Endothelial cell of umbilical vein (primary cell): ENCODE measurements at regions of chr12 and their contacts with region 1.

Region 1: GRCh38 chr12:1117970-1118563 is 127.0 kb downstream of the ERC1 start:
- DNase-seq: peak; percentile 81
- H3K4me3 ChIP-seq: no peak overlapping the region
- H3K27ac ChIP-seq: no peak overlapping the region
- H3K4me1 ChIP-seq: peaks cover 13% of the 10 kb centered on the region
- H3K27me3 ChIP-seq: no peaks in the 10 kb centered on the region
- CTCF ChIP-seq: peak; percentile 66 to 79
- POLR2A ChIP-seq: no peak

Region 2: DNA sequence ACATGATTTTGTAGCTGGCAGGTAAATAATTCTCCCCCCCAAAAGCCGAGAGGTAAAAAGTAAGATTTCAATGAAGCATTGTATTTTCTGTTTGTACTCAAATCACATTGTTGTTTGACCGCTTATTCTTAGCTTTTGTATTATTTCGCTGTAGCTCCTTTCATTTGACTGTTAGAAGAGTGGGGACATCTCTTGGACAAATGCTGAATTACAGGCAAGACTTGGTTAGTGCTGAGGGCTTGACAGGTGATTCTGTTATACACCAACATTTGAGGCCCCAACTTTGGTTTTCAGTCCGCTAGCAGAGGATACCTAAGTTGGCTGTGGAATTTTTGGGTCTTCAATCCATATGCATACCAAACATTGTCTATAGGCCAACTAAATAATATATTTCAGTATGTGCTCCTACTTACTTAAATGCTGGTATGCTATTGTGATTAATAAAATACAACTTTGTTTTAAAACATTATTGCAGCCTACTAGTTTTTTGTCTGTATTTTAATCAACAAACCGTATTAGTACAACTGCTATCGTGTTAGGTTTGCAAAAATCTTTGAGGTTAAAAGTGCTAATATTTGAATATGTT is 24.8 kb before region 1 on chr12:
- CTCF ChIA-PET with region 1: interaction called, 17 read pairs
- POLR2A ChIA-PET with region 1: no interaction called
- dilution Hi-C with region 1: no loop called
- intact Hi-C with region 1: no loop called
- DNase-seq: peak; percentile 73
- H3K4me3 ChIP-seq: no peak overlapping the region
- H3K27ac ChIP-seq: no peak overlapping the region
- H3K4me1 ChIP-seq: no peaks in the 10 kb centered on the region
- H3K27me3 ChIP-seq: no peaks in the 10 kb centered on the region
- CTCF ChIP-seq: peak; percentile 53 to 58
- POLR2A ChIP-seq: no peak

Region 3: DNA sequence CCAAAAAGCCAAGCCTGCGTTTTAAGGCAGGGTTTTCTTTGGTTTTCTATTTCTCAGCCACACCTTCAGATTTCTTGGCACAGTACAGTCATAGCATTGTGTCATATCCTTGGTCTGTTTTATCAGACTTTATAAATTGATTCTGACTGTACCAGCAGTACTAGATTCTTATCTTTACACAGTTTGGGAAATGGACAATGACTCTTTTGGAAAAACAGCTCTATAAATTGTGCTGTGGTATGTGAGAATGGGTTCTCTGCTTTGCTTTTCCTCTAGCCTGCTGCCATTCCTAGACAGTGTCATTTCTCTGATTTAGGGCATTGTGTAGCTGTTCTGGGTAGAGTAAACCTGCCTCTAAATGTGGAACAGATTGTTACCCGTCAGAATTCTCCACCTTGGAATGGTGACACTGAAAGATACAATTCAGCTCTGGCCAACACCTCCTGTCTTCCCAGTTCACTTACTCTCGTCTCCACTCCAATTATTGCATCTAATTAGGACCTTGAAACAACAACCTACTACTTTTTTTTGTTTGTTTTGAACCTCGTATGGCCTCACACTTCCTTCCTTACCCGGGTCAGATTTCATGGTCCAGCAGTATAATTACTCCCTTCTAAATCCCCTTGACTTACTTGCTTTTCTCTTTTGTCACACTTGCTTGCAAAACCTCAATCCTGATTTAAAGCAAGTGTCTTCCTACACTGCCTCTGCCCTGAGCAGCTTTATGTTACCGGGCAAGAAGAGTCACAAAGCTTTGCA is 99.3 kb after region 1 on chr12:
- CTCF ChIA-PET with region 1: interaction called, 10 read pairs
- POLR2A ChIA-PET with region 1: no interaction called
- dilution Hi-C with region 1: no loop called
- intact Hi-C with region 1: loop called (anchors 5 kb)
- DNase-seq: peak; percentile 89
- H3K4me3 ChIP-seq: peak overlapping the region in 1 of 3 experiments; percentile 52
- H3K27ac ChIP-seq: peak overlapping the region; percentile 98
- H3K4me1 ChIP-seq: peaks cover 20% of the 10 kb centered on the region
- H3K27me3 ChIP-seq: no peaks in the 10 kb centered on the region
- CTCF ChIP-seq: no peak
- POLR2A ChIP-seq: peak; percentile 39

Region 4: DNA sequence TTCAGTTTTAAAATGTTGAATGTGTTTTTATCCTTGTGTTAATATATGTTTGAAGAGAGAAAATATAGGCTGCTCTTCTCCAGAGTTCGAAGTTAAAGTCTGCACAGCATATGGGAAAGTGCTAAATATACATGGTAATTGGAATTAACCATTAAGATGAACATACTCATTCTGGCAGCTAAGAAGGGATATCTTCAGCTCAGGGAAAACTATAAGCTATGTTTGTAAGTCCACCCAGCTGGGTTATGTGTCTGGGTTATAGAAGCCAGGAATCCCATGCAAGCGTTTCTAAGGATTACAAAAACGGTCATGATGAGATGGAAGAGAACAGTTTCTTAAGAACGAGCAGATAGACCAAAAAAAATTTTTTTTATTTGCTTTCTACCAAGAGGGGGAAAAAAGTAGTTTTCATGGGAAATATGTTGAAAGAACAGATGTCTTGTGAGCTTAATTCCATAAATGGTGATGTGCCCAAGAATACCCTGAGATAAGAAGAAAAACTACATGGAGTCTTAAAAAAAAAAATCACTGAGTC is 277.4 kb after region 1 on chr12:
- CTCF ChIA-PET with region 1: interaction called, 11 read pairs
- POLR2A ChIA-PET with region 1: no interaction called
- dilution Hi-C with region 1: no loop called
- intact Hi-C with region 1: no loop called
- DNase-seq: no peak
- H3K4me3 ChIP-seq: no peak overlapping the region
- H3K27ac ChIP-seq: no peak overlapping the region
- H3K4me1 ChIP-seq: no peaks in the 10 kb centered on the region
- H3K27me3 ChIP-seq: no peaks in the 10 kb centered on the region
- CTCF ChIP-seq: no peak
- POLR2A ChIP-seq: no peak

Region 5: DNA sequence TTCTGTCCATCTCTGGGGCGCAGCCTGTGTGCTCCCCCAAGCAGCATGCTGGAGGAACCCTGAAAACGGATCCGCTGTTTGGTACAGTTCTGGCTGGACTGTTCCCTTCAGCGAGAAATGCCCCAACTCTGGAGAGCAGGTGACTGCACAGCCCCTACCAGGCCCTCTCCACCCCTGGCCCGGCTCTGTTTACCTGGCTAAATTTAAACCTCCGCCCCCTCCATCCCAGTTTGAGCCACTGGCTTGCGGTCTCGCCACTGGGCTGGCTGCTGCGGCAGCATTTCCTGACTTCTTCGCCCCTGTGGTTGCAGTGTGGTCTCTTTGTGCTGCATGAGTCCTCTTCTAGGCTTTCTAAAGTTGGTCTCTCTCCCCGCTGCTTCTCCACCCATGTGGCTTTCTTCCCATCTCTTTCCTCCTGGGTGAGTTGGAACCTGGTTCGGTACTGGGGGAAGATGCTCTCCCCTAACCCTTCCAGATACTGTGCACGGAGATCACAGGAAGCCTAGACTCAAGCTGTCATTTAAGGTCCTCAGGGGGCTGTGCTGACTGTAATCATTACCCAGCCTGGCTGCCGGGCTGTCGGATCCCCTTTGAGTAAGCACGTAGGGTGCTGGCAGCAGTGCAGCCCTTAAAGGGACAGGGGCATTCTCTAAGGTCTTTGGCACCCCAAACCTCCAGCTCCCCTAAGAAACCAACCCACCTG is 415.7 kb after region 1 on chr12:
- CTCF ChIA-PET with region 1: interaction called, 22 read pairs
- POLR2A ChIA-PET with region 1: no interaction called
- dilution Hi-C with region 1: no loop called
- intact Hi-C with region 1: no loop called
- DNase-seq: no peak
- H3K4me3 ChIP-seq: no peak overlapping the region
- H3K27ac ChIP-seq: no peak overlapping the region
- H3K4me1 ChIP-seq: no peaks in the 10 kb centered on the region
- H3K27me3 ChIP-seq: peaks cover 52 to 68% of the 10 kb centered on the region in 2 experiments
- CTCF ChIP-seq: no peak
- POLR2A ChIP-seq: no peak

Region 6: DNA sequence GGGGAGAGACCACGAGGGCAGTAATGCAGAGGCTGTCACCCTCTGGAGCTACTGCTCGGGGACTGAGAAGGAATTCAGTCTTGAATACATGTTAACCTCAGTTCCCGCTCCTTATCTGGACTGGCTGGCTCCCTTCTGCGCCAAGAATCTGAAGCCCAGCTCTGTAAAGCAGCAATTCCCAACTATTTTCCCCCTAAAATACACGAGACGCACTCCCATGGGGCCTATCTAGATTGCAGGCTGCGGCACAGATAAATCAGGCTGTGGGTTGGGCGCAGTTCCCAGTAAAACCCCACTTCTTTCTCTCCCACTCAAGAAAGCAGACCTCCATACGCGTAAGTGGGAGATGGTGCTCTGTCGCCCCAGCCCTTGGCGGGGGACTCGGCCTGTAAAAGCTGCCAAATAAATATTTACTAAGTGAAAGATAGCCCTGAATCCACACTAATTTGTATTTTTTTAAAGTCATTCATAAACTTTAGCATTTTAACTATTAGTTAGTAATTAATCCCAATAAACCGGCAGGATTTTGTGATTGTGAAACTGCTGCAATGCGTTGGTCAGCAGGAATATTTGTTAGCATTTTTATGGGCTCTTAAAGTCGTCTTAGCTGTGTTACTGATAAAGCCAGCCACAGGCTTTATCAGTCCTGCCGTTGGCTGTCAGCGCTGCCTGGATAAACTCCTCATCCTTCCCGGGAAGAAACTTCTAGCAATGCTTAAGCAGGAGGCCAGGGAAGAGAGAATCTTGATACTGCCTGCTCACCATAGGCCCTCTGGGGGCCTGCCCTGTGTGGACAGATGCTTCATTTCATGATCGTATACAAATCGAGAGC is 458.6 kb after region 1 on chr12:
- CTCF ChIA-PET with region 1: interaction called, 469 read pairs
- POLR2A ChIA-PET with region 1: no interaction called
- dilution Hi-C with region 1: loop called (anchors 25 kb)
- intact Hi-C with region 1: no loop called
- DNase-seq: no peak
- H3K4me3 ChIP-seq: no peak overlapping the region
- H3K27ac ChIP-seq: no peak overlapping the region
- H3K4me1 ChIP-seq: peaks cover 10% of the 10 kb centered on the region
- H3K27me3 ChIP-seq: peaks cover 9 to 16% of the 10 kb centered on the region in 2 experiments
- CTCF ChIP-seq: no peak
- POLR2A ChIP-seq: no peak